ENCODE measurements at regions of chr12 and their contacts with region 1.

Region 1: GRCh38 chr12:48157018-48157888 is at the start of gene ASB8:
- DNase-seq: peak; percentile 93 to 97
- H3K4me3 ChIP-seq: peak within 1 kb of the TSS; percentile 90
- H3K27ac ChIP-seq: no peak within 1 kb of the TSS; the same call in 1 of the 2 replicates
- H3K4me1 ChIP-seq: peaks cover 7% of the 10 kb centered on the region; the same call in 1 of the 2 replicates
- H3K27me3 ChIP-seq: no peaks in the 10 kb centered on the region
- CTCF ChIP-seq: peak; percentile 52
- total RNA-seq, gene ASB8: 21.8 and 25.1 TPM in 2 replicates

Region 2: DNA sequence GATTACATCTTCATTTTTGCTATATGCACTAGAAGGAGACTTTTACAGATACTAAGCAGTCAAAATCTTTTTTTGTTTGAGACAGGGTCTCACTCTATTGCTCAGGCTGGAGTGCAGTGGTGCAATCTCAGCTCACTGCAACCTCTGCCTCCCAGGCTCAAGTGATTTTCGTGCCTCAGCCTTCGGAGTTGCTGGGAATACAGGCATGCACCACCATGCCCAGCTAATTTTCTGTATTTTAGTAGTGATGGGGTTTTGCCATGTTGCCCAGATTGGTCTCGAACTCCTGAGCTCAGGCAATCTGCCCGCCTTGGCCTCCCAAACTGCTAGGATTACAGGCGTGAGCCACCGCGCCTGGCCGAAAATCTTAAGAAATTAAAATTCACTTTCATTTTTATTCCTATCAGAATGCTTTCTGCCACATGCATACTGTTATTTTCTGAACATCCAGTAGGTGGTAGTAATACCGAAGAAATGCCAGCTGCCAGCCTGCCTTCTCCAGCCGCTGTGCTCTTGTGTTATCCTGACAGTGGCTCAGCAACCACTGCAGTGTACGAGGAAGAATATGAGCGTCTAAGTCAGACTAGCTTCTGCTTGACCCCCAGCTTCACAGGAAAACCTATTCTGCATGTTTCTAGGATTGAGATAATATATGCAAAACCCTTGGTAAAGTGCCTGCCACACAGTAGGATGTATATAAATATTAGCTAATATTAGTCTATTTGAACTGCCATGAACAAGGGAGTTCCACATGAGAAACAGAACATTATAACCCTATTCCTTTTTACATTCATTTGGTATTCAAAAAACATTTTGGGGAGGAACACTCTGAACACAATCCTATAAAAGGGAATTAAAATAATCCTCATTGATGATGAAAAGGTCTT is 505.6 kb before region 1 on chr12:
- CTCF ChIA-PET with region 1: interaction called, 10 read pairs
- POLR2A ChIA-PET with region 1: no interaction called
- intact Hi-C with region 1: no loop called
- DNase-seq: peak; percentile 31 to 39
- H3K4me3 ChIP-seq: peak overlapping the region; percentile 30; the same call in 1 of the 2 replicates
- H3K27ac ChIP-seq: no peak overlapping the region
- H3K4me1 ChIP-seq: 0 out of 2 replicates have a peak, but pooled peaks cover 9% of the 10 kb centered on the region
- H3K27me3 ChIP-seq: no peaks in the 10 kb centered on the region
- CTCF ChIP-seq: peak; percentile 75

Region 3: GRCh38 chr12:48105862-48106680 is 51.2 kb before region 1 on chr12 and contains the start of gene SENP1:
- CTCF ChIA-PET with region 1: no interaction called
- POLR2A ChIA-PET with region 1: no interaction called
- intact Hi-C with region 1: loop called (anchors 5 kb)
- DNase-seq: peak; percentile 61 to 84
- H3K4me3 ChIP-seq: peak within 1 kb of the TSS; percentile 76
- H3K27ac ChIP-seq: peak within 1 kb of the TSS; percentile 80
- H3K4me1 ChIP-seq: peaks cover 29% of the 10 kb centered on the region
- H3K27me3 ChIP-seq: no peaks in the 10 kb centered on the region
- CTCF ChIP-seq: no peak; the same call in 1 of the 2 replicates
- total RNA-seq, gene SENP1: 20.9 and 23.0 TPM in 2 replicates

Region 4: DNA sequence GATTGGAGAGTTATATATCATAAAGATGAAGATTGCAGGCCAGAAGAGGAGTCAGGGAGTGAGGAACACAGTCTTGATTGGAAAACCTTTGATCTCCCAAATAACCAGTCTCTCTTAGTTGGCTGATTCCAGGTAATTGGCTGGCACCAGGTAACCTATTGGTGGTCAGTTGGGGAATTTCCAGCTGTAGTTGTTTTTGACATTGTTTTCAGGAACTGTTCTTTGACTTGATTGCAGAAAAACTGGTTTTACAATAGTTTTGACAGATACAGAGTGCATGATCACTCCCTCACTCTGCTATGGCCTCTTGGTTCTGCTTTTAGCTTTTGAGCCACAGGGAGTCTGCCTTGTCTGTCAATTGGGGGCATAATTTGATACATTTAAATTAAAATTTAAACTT is 121.8 kb after region 1 on chr12:
- CTCF ChIA-PET with region 1: no interaction called
- POLR2A ChIA-PET with region 1: no interaction called
- intact Hi-C with region 1: no loop called
- DNase-seq: no peak
- H3K4me3 ChIP-seq: no peak overlapping the region
- H3K27ac ChIP-seq: no peak overlapping the region
- H3K4me1 ChIP-seq: 0 out of 2 replicates have a peak, but pooled peaks cover 3% of the 10 kb centered on the region
- H3K27me3 ChIP-seq: no peaks in the 10 kb centered on the region
- CTCF ChIP-seq: no peak

Region 5: GRCh38 chr12:48302161-48302911 is 145.1 kb after region 1 on chr12:
- CTCF ChIA-PET with region 1: no interaction called
- POLR2A ChIA-PET with region 1: no interaction called
- intact Hi-C with region 1: no loop called
- DNase-seq: no peak
- H3K4me3 ChIP-seq: no peak overlapping the region
- H3K27ac ChIP-seq: no peak overlapping the region
- H3K4me1 ChIP-seq: no peaks in the 10 kb centered on the region
- H3K27me3 ChIP-seq: no peaks in the 10 kb centered on the region
- CTCF ChIP-seq: no peak

Measured in PC-9 (cell line).